ENCODE measurements at regions of chr5 and their contacts with region 1.

Region 1: GRCh38 chr5:43040287-43041098 is at the start of gene ANXA2R:
- DNase-seq: peak; percentile 98
- H3K4me3 Mint-ChIP-seq: peak within 1 kb of the TSS; percentile 96
- H3K27ac Mint-ChIP-seq: peak within 1 kb of the TSS; percentile 99
- H3K4me1 Mint-ChIP-seq: peaks cover 26% of the 10 kb centered on the region
- H3K27me3 Mint-ChIP-seq: no peaks in the 10 kb centered on the region
- total RNA-seq, gene ANXA2R: 6.0 to 6.5 TPM

Region 2: GRCh38 chr5:42756606-42757601 is 283.6 kb before region 1 on chr5 and contains the start of gene CCDC152:
- CTCF ChIA-PET with region 1: no interaction called
- intact Hi-C with region 1: loop called (anchors 5 kb)
- DNase-seq: peak; percentile 60
- H3K4me3 Mint-ChIP-seq: peak within 1 kb of the TSS; percentile 84
- H3K27ac Mint-ChIP-seq: peak within 1 kb of the TSS; percentile 80
- H3K4me1 Mint-ChIP-seq: peaks cover 9% of the 10 kb centered on the region
- H3K27me3 Mint-ChIP-seq: peaks cover 7% of the 10 kb centered on the region
- total RNA-seq, gene CCDC152: 7.9 to 8.1 TPM

Region 3: GRCh38 chr5:42950440-42951292 is 89.8 kb before region 1 on chr5:
- CTCF ChIA-PET with region 1: interaction called, 9 read pairs
- intact Hi-C with region 1: loop called (anchors 1 kb)
- DNase-seq: peak; percentile 83
- H3K4me3 Mint-ChIP-seq: peak overlapping the region; percentile 87
- H3K27ac Mint-ChIP-seq: peak overlapping the region; percentile 88
- H3K4me1 Mint-ChIP-seq: peaks cover 9% of the 10 kb centered on the region
- H3K27me3 Mint-ChIP-seq: no peaks in the 10 kb centered on the region

Region 4: GRCh38 chr5:43008369-43009153 is 31.9 kb before region 1 on chr5:
- CTCF ChIA-PET with region 1: interaction called, 35 read pairs
- intact Hi-C with region 1: loop called (anchors 1 kb)
- DNase-seq: peak; percentile 93
- H3K4me3 Mint-ChIP-seq: peak overlapping the region; percentile 79
- H3K27ac Mint-ChIP-seq: peak overlapping the region; percentile 97
- H3K4me1 Mint-ChIP-seq: peaks cover 24% of the 10 kb centered on the region
- H3K27me3 Mint-ChIP-seq: no peaks in the 10 kb centered on the region

Region 5: DNA sequence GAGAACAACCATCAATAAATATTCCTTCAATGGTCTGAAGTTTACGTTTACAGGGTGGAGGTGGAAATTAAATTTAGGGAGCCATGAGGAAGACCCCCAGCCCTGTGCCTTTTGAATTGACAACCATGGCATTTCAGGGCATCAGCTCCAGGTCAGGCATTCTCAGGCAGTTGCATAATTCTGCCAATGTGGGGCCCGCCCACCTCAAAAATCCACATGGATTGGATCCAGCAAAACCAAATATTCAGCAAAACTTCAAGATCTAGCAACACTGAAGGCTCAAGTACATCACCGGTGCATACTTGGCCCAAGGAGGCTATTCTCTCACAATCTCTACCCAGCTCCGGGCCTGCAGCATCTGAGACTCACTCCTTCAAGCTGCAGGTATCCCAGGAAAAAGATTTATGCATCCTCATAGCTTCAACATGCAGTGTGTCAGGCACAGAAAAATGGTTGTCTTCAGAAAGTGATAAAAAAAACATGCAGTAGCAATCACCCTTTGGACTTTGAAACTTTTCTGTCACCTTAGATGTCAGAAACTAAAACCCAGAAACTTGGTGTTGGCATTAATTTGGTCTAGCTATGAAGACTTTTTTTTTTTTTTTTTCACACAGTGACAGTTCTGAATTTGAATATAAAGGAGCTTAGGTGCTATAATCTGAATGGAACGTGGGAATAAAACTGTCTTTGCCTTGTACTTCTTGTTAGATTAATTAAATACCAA is 21.0 kb after region 1 on chr5:
- CTCF ChIA-PET with region 1: interaction called, 23 read pairs
- intact Hi-C with region 1: loop called (anchors 1 kb)
- DNase-seq: no peak
- H3K4me3 Mint-ChIP-seq: no peak overlapping the region
- H3K27ac Mint-ChIP-seq: no peak overlapping the region
- H3K4me1 Mint-ChIP-seq: peaks cover 9% of the 10 kb centered on the region
- H3K27me3 Mint-ChIP-seq: no peaks in the 10 kb centered on the region

Region 6: DNA sequence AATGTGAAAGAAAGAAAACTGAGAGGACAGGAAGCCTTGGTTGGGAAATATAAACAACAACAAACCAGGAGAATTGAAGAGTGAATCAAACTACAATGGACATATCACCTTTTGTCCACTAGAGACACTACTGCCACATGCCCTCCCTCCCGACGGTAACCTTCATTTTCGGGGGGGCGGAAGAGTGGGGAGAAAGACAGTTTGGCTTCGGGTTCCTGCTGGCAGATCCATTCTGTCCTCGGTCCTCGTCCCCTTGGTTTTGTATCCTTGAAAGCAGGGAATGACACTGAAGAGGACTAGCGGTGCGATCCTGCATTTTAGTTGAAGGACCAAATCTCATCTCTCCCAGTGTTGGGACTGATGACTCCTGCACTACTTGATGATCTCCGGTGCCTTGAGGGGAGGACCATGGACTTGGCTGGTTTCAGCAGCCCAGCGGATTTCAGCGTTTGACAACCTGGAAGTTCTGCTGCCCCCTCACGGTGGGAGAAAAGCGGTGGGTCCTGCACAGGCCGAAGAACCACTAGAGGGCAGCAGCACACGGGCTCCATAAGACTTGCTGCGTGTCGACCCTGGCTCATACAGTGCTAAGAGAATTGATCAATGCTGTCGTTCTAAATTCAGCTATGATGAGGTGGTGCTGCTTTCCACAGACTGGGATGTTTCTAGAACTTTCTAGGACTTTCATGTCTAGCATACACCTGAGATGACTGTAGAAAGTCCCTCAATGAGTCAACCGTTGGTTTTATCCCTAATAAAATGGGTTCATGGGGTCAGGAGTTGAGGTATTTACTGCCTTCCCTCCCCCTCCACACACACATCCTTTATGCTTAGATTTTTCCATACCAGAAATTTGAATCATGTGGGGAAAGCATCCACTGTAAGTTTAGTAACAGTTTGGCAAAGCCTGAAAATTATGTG is 65.1 kb after region 1 on chr5:
- CTCF ChIA-PET with region 1: interaction called, 4 read pairs
- intact Hi-C with region 1: loop called (anchors 1 kb)
- DNase-seq: peak; percentile 92
- H3K4me3 Mint-ChIP-seq: peak overlapping the region; percentile 81
- H3K27ac Mint-ChIP-seq: peak overlapping the region; percentile 87
- H3K4me1 Mint-ChIP-seq: peaks cover 42% of the 10 kb centered on the region
- H3K27me3 Mint-ChIP-seq: no peaks in the 10 kb centered on the region

Measured in activated naive CD4-positive, alpha-beta T cell treated with anti-CD3 and anti-CD28 coated beads for 36 hours (primary cell).